Aorta (tissue), 5 donors: ENCODE measurements at regions of chr1 and their contacts with region 1.

Region 1: GRCh38 chr1:56584910-56585528 is 5.7 kb upstream of the PLPP3 start:
- DNase-seq: no peak
- ATAC-seq: peak; percentile 84
- H3K4me3 ChIP-seq: no peak overlapping the region
- H3K27ac ChIP-seq: no peak overlapping the region
- H3K4me1 ChIP-seq: no peaks in the 10 kb centered on the region
- H3K27me3 ChIP-seq: no peaks in the 10 kb centered on the region

Region 2: GRCh38 chr1:55140546-55140983 is 1444.5 kb before region 1 on chr1:
- intact Hi-C with region 1: loop called in 1 of 2 experiments (anchors 10 kb)
- DNase-seq: peak in 1 of 2 donors; percentile 71
- ATAC-seq: peak; percentile 95
- H3K4me3 ChIP-seq: no peak overlapping the region
- H3K27ac ChIP-seq: no peak overlapping the region
- H3K4me1 ChIP-seq: no peaks in the 10 kb centered on the region
- H3K27me3 ChIP-seq: no peaks in the 10 kb centered on the region

Region 3: GRCh38 chr1:55284852-55285251 is 1300.2 kb before region 1 on chr1:
- intact Hi-C with region 1: loop called (anchors 1 to 2 kb)
- DNase-seq: no peak
- ATAC-seq: peak; percentile 49
- H3K4me3 ChIP-seq: no peak overlapping the region
- H3K27ac ChIP-seq: no peak overlapping the region
- H3K4me1 ChIP-seq: no peaks in the 10 kb centered on the region
- H3K27me3 ChIP-seq: no peaks in the 10 kb centered on the region

Region 4: GRCh38 chr1:55375617-55376258 is 1209.3 kb before region 1 on chr1:
- intact Hi-C with region 1: loop called in 1 of 2 experiments (anchors 2 kb)
- DNase-seq: no peak
- ATAC-seq: peak; percentile 69
- H3K4me3 ChIP-seq: no peak overlapping the region
- H3K27ac ChIP-seq: no peak overlapping the region
- H3K4me1 ChIP-seq: no peaks in the 10 kb centered on the region
- H3K27me3 ChIP-seq: no peaks in the 10 kb centered on the region

Region 5: DNA sequence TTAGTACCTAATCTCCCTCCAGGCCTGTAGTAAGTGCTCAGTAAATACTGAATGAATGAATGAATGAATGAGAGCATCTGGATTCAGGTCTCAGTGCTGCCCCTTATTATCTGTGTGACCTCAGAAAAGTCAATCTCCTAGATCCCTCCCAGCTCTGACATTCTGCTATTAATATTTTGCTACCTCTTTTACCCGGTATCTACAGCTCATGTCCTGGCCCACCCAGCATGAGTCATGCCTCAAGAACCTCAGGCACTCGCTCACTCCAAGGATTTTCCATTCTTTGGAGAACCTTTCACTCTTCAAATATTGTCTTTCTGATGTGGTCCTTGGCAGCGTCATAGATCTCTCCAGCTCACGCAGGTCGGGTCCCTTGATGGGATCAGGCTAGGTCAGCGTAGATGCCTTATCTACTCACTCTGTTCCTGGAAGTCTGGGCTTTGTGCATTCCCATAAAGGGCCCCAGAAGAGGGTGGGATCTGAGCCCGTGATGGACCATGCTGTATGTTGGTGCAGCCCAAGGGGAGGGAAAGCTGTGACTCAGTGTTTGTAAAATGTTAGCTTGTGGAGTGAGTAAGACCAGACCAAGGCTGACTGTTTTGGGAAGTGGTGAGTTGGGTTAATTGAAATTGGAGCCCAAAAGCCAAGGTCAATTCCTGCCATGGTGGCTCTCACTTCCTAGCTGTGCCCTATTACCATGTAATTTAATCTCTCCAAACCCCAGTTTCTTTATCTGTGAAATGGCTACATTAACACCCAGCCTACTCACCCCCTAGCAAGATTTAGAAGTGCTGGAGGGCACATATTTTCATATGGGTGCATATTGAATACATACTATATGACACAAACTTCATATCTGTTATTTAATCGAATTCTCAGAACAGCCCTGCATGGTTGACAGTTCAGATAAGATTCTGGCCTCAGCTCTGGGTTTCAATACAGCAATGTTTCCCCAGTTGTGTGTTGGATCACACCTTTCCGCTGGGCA is 1155.8 kb before region 1 on chr1:
- intact Hi-C with region 1: loop called in 1 of 2 experiments (anchors 5 kb)
- DNase-seq: peak; percentile 89
- ATAC-seq: peak; percentile 90
- H3K4me3 ChIP-seq: no peak overlapping the region
- H3K27ac ChIP-seq: peak overlapping the region; percentile 71 to 88
- H3K4me1 ChIP-seq: peaks cover 2 to 7% of the 10 kb centered on the region in 2 donors
- H3K27me3 ChIP-seq: no peaks in the 10 kb centered on the region

Region 6: GRCh38 chr1:56056438-56057287 is 528.4 kb before region 1 on chr1:
- intact Hi-C with region 1: no loop called
- DNase-seq: no peak
- ATAC-seq: peak; percentile 38
- H3K4me3 ChIP-seq: no peak overlapping the region
- H3K27ac ChIP-seq: no peak overlapping the region
- H3K4me1 ChIP-seq: peaks cover 0 to 6% of the 10 kb centered on the region in 2 donors
- H3K27me3 ChIP-seq: no peaks in the 10 kb centered on the region

Region 7: DNA sequence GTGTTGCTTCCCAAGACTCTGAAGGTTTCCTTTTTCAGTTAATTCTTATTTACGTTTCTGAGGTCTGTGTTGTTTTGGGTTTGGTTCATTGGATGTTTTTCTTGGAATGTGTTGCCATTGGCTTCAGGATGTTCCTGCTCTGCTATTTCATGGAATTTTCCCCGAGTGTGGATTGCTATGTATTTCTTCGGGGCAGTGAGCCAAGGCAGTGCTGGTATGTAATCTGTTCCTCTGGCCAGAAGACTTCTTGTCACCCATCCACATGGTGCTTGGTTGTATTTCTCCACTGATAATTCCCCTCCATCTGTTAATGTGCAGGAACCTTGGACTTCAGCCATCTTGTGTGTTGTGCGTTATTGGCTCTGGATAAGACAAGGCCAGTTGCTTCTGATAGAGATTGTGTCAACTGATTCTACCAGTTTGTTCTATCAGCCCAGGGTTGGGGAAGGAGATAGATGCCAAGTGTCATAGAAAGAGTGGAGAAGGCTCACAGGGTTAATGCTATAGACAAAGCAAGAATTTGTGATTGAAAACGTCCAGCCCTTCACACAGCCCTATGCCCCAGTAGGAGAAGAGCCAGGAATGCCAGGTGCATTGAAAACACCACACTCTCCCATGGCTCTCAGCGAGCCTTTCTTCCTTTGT is 510.9 kb before region 1 on chr1:
- intact Hi-C with region 1: loop called in 1 of 2 experiments (anchors 5 kb)
- DNase-seq: peak; percentile 85 to 88
- ATAC-seq: peak; percentile 88
- H3K4me3 ChIP-seq: no peak overlapping the region
- H3K27ac ChIP-seq: peak overlapping the region; percentile 57 to 80
- H3K4me1 ChIP-seq: peaks cover 6 to 17% of the 10 kb centered on the region in 2 donors
- H3K27me3 ChIP-seq: no peaks in the 10 kb centered on the region

Region 8: DNA sequence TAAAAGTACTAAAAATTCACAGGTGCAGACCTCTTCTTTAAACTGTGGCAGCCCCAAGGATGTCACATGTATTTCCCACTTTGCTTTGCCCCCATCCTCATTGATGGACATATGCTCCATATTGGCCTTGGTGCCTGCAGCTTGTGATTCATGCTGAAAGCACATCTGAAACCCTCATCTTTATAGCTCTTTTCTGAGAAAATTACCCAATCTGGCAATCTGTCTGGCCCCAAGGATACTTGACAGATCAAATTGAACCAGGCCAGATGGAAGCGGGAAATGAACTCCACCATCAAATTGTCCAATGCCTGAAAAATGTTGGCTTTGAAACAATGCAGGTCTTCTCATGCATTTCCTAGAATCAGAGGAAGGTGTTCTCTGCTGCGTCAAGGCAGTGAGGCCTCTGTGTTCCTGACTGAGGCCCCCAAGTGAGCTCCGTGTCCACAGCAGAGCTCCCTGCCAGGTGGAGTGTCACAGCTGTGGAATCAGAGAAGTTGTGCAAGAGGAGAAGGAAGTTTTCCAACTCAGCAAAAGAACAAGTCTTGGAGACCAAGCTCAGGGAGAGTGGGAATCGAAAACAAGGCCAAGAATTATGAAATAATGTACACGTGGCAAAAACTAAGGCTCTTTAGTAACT is 329.4 kb before region 1 on chr1:
- intact Hi-C with region 1: loop called in 1 of 2 experiments (anchors 10 kb)
- DNase-seq: peak; percentile 75 to 83
- ATAC-seq: peak; percentile 91
- H3K4me3 ChIP-seq: no peak overlapping the region
- H3K27ac ChIP-seq: no peak overlapping the region
- H3K4me1 ChIP-seq: peaks cover 0 to 2% of the 10 kb centered on the region in 2 donors
- H3K27me3 ChIP-seq: no peaks in the 10 kb centered on the region

Region 9: DNA sequence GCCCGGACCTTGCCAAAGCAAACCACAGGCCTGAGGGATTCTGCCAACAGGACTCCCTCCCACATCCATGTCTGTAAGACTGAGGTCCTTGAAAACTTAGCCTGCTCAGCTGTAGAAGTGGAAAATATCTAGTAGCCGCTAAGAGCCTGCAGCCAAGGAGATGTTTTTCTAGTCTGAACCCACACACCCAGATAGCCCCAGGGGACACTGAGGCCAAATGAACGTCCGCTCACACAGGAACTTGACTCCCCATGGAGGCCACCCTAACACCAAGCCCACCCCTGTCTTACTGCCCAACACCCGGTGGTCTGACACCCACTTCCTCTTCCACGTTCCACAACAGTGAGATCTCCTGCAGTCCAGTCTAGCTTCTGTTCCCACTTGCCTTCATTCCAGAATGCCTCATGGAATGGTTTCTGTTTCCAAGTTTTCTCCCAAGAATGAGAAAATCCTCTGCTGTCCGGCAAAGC is 180.4 kb before region 1 on chr1:
- intact Hi-C with region 1: no loop called
- DNase-seq: peak in 1 of 2 donors; percentile 74
- ATAC-seq: peak; percentile 74
- H3K4me3 ChIP-seq: no peak overlapping the region
- H3K27ac ChIP-seq: peak overlapping the region in 1 of 2 donors; percentile 78
- H3K4me1 ChIP-seq: peaks cover 0 to 8% of the 10 kb centered on the region in 2 donors
- H3K27me3 ChIP-seq: no peaks in the 10 kb centered on the region

Region 10: DNA sequence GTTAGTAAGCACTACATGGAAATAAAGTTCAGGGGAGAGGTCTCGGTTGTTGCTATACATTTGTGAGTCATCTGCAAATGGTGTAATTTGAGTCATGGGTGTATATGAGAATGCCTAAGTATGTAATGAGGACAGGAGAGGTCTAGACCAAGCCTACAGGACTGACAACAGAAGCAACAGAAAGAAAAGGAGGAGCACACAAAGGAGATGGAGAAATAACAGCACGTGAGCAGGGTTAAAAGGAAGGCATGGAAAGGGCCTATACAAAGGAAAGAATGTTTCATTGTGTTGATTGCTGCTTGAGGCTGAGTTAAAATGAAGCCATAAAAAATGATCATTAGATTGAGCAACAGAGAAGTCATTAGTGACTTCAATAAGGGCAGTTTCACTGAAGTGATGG is 32.1 kb after region 1 on chr1:
- intact Hi-C with region 1: no loop called
- DNase-seq: no peak
- ATAC-seq: no peak
- H3K4me3 ChIP-seq: no peak overlapping the region
- H3K27ac ChIP-seq: no peak overlapping the region
- H3K4me1 ChIP-seq: no peaks in the 10 kb centered on the region
- H3K27me3 ChIP-seq: no peaks in the 10 kb centered on the region